ENCODE measurements at regions of chr10 and their contacts with region 1.

Region 1: GRCh38 chr10:72088889-72089575 is 681 bp upstream of the SPOCK2 start:
- DNase-seq: peak; percentile 39
- ATAC-seq: peak; percentile 23
- H3K4me3 Mint-ChIP-seq: peak overlapping the region; percentile 82
- H3K27ac Mint-ChIP-seq: no peak overlapping the region
- H3K4me1 Mint-ChIP-seq: peaks cover 24% of the 10 kb centered on the region
- H3K27me3 Mint-ChIP-seq: peaks cover 55% of the 10 kb centered on the region
- CTCF ChIP-seq: no peak

Region 2: GRCh38 chr10:72041491-72041890 is 47.5 kb before region 1 on chr10:
- CTCF ChIA-PET with region 1: no interaction called
- POLR2A ChIA-PET with region 1: no interaction called
- DNase-seq: no peak
- ATAC-seq: no peak
- H3K4me3 Mint-ChIP-seq: no peak overlapping the region
- H3K27ac Mint-ChIP-seq: peak overlapping the region; percentile 53; the same call in 1 of the 2 replicates
- H3K4me1 Mint-ChIP-seq: peaks cover 17% of the 10 kb centered on the region
- H3K27me3 Mint-ChIP-seq: no peaks in the 10 kb centered on the region
- CTCF ChIP-seq: no peak

Region 3: GRCh38 chr10:72069751-72070526 is 19.1 kb before region 1 on chr10:
- CTCF ChIA-PET with region 1: interaction called, 11 read pairs
- POLR2A ChIA-PET with region 1: no interaction called
- DNase-seq: peak; percentile 60
- ATAC-seq: peak; percentile 49
- H3K4me3 Mint-ChIP-seq: no peak overlapping the region
- H3K27ac Mint-ChIP-seq: no peak overlapping the region
- H3K4me1 Mint-ChIP-seq: peaks cover 5% of the 10 kb centered on the region
- H3K27me3 Mint-ChIP-seq: no peaks in the 10 kb centered on the region
- CTCF ChIP-seq: no peak; the same call in 1 of the 2 replicates

Region 4: DNA sequence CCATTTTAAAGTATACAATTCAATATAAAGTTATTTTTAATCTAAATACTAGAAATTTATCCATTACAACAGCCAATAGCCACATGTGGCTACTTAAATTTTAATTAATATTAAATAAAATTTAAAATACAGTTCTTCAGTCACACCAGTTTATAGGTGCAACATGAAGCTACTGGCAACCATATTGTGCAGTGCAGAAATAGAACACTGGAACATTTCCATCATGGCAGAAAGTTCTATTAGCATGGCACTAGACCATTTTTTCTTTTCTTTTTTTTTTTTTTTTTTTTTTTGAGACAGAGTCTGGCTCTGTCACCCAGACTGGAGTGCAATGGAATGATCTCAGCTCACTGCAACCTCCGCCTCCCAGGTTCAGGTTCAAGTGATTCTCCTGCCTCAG is 132.2 kb after region 1 on chr10:
- CTCF ChIA-PET with region 1: no interaction called
- POLR2A ChIA-PET with region 1: no interaction called
- DNase-seq: no peak
- ATAC-seq: no peak
- H3K4me3 Mint-ChIP-seq: no peak overlapping the region
- H3K27ac Mint-ChIP-seq: no peak overlapping the region
- H3K4me1 Mint-ChIP-seq: peaks cover 12% of the 10 kb centered on the region
- H3K27me3 Mint-ChIP-seq: no peaks in the 10 kb centered on the region
- CTCF ChIP-seq: no peak

Region 5: DNA sequence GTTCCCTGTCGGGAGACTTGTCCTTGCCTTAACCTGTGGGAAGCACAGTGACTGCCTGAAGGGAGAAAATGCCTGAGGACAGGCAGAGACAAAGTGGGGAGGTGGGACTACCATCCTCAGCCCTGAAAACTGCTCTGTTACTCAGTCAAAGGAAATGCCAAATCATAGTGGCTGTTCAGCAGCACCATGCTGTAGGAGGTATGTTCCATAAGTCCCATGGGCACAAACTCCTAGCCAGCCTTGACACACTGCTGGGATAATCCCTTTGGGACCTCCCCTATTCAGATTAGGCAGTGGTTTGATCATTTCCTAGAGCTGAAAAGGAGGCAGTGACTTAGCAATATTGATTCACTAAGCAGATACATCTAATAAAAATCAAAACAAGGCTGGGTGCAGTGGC is 683.0 kb after region 1 on chr10:
- CTCF ChIA-PET with region 1: no interaction called
- POLR2A ChIA-PET with region 1: no interaction called
- DNase-seq: no peak
- ATAC-seq: peak; percentile 65
- H3K4me3 Mint-ChIP-seq: no peak overlapping the region
- H3K27ac Mint-ChIP-seq: peak overlapping the region; percentile 21
- H3K4me1 Mint-ChIP-seq: peaks cover 8% of the 10 kb centered on the region
- H3K27me3 Mint-ChIP-seq: no peaks in the 10 kb centered on the region
- CTCF ChIP-seq: no peak

Measured in WTC11 (cell line).